Activated CD8-positive, alpha-beta T cell treated with anti-CD3 and anti-CD28 coated beads, Interleukin-2, amount 10 ng/mL, durations not matched to agents 7 days and 5 days (primary cell): ENCODE measurements at regions of chr2 and their contacts with region 1.

Region 1: GRCh38 chr2:24065341-24065740 is 10.8 kb downstream of the SF3B6 start:
- DNase-seq: no peak
- ATAC-seq: no peak
- H3K4me3 Mint-ChIP-seq: no peak overlapping the region
- H3K27ac Mint-ChIP-seq: no peak overlapping the region
- H3K4me1 Mint-ChIP-seq: peaks cover 12% of the 10 kb centered on the region
- H3K27me3 Mint-ChIP-seq: no peaks in the 10 kb centered on the region

Region 2: DNA sequence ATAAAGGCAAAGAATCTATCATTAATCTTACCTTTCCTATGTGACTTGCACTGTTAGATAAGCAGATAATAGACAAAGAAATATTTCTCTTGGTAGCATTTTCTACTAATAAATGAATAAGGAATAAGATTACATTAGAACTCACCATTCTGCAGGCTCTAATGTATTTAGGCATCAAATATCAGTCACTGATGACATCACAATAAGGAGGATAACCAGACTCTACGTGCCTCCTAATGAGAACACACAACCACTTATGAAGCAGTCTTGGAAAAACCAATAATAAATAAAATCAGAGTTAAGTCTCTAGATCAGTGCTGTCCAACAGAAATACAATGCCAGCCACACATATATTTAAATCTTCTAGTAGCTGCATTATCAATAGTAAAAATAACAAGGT is 334.1 kb before region 1 on chr2:
- CTCF ChIA-PET with region 1: no interaction called
- POLR2A ChIA-PET with region 1: no interaction called
- DNase-seq: no peak
- ATAC-seq: no peak
- H3K4me3 Mint-ChIP-seq: no peak overlapping the region
- H3K27ac Mint-ChIP-seq: no peak overlapping the region
- H3K4me1 Mint-ChIP-seq: no peaks in the 10 kb centered on the region
- H3K27me3 Mint-ChIP-seq: no peaks in the 10 kb centered on the region

Region 3: DNA sequence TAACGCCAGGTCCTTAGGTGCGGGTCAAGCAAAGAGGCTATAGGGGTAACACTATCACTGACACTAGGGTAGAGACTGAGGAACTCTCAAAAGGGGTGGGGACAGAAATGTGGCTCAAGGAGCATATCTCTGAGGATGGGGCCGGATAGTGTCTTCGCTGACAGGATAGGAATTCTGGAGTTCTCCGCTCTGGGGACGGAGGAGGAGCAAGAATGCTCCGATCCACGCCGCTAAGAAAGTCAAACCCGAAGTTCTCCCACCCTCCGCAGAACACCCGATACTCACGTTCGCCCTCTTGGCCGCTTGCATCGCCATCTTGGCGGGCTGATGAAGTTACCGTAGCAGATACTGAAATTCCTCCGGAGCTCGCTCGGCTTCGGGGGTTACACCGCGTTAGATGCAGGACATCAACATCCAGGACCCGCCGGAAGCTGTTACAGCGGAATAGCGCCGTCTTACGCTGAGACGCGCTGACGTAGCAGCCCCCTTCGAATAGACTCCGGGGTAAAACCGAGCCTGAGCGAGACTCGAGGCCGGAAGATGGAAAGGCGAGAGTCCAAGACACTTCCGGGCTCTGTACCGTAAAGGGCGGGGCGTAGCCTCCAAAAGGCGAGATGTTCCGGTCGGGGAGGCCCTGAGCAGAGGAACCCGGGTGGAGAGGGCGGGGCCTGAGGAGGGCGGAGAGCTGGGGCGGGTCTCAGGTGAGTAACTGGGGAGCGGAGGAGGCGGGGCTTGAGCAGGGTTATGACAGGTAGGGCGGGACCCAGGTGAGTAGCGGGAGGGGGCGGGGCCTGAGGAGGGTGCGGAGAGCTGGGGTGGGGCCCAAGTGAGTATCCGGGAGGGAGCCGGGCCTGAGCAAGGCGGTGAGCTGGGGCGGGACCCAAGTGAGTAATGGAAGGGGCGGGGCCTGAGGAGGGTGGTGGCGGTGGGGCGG is 10.8 kb after region 1 on chr2 and contains the start of gene SF3B6:
- CTCF ChIA-PET with region 1: interaction called, 13 read pairs
- POLR2A ChIA-PET with region 1: interaction called, 4 read pairs
- DNase-seq: peak; percentile 100
- ATAC-seq: peak; percentile 93
- H3K4me3 Mint-ChIP-seq: peak within 1 kb of the TSS; percentile 98
- H3K27ac Mint-ChIP-seq: peak within 1 kb of the TSS; percentile 98
- H3K4me1 Mint-ChIP-seq: peaks cover 40% of the 10 kb centered on the region
- H3K27me3 Mint-ChIP-seq: no peaks in the 10 kb centered on the region
- total RNA-seq, gene SF3B6: 94.6 to 96.2 TPM

Region 4: GRCh38 chr2:24101992-24102391 is 36.7 kb after region 1 on chr2:
- CTCF ChIA-PET with region 1: no interaction called
- POLR2A ChIA-PET with region 1: no interaction called
- DNase-seq: no peak
- ATAC-seq: no peak
- H3K4me3 Mint-ChIP-seq: no peak overlapping the region
- H3K27ac Mint-ChIP-seq: no peak overlapping the region
- H3K4me1 Mint-ChIP-seq: no peaks in the 10 kb centered on the region
- H3K27me3 Mint-ChIP-seq: no peaks in the 10 kb centered on the region